ENCODE measurements at regions of chr16 and their contacts with region 1.

Region 1: GRCh38 chr16:84982434-84982833 is 28.9 kb downstream of the ZDHHC7 start:
- DNase-seq: no peak
- H3K4me3 ChIP-seq: no peak overlapping the region
- H3K27ac ChIP-seq: no peak overlapping the region
- H3K4me1 ChIP-seq: no peaks in the 10 kb centered on the region
- H3K27me3 ChIP-seq: no peaks in the 10 kb centered on the region
- CTCF ChIP-seq: no peak

Region 2: GRCh38 chr16:84959784-84960417 is 22.5 kb before region 1 on chr16:
- CTCF ChIA-PET with region 1: interaction called, 10 read pairs
- POLR2A ChIA-PET with region 1: no interaction called
- intact Hi-C with region 1: no loop called
- DNase-seq: no peak
- H3K4me3 ChIP-seq: no peak overlapping the region
- H3K27ac ChIP-seq: no peak overlapping the region
- H3K4me1 ChIP-seq: no peaks in the 10 kb centered on the region
- H3K27me3 ChIP-seq: no peaks in the 10 kb centered on the region
- CTCF ChIP-seq: no peak

Measured in A673 (cell line).